Head of caudate nucleus (tissue), 42 donors: ENCODE measurements at regions of chr9 and their contacts with region 1.

Region 1: DNA sequence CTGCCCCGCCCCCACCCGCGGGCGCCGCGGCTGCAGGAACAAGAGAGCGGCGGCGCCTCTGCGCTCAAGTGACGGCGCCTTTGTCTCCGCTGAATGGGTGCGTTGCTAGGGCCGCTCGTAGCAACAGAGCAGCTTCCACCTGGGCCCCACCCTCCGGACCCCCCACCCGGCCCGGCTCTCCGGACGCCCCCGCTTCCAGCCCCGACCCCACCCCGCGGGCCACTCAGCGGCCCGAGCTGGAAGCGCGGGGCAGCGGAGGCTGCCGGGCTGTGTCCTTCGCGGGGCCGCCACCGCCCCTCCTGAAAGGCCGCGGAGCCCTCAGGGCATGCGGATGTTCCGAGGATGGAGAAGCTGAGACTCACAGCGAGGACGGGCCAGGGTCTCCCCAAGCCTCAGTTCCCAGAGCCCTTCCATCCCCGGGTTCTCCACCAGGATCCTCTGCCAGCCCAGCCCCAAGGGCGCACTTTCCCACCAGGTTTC is 27.6 kb downstream of the ADGRD2 start:
- DNase-seq: peak in 23 of 42 donors; percentile 6 to 47 (median 28)

Region 2: DNA sequence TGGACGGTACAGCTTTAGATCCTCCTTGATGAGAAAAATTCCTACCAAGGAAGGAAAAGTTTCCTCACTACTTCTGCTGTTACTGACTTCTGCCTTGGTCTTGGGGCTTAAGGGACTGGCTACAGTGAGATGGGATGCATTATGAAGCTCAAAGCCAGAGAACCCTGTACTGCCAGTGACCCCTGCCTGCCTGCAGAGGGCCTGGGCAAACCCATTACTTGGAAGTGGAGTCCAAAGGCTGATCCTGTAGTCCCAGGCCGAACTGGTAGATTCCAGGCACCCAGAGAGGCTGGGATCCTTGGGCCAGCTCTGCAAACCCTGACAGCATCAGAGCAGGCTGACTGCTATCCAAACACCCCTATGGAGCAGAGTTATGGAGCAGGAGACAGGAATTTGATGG is 55.1 kb after region 1 on chr9:
- intact Hi-C with region 1: loop called (anchors 10 kb)
- DNase-seq: no peak